ENCODE measurements at regions of chr2 and their contacts with region 1.

Region 1: DNA sequence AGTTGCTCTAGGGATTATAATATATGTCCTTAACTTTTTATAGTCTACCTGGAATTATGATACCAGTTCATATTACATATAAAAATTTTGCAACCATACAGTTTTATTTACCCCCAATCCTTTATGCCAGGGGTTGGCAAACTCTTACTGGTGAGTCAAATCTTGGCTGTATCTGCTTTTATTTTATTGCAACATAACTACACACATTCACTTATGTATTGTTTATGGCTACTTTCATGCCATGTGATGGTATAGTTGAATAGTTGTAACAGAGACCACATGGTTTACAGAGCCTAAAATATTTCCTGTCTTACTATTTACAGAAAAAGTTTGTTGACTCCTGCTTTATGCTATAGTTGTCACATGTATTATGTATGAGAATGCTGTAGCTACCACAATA is 25.8 kb upstream of the DLX2 start:
- DNase-seq: no peak
- ATAC-seq: no peak
- H3K4me3 ChIP-seq: no peak overlapping the region
- H3K27ac ChIP-seq: no peak overlapping the region
- H3K4me1 ChIP-seq: no peaks in the 10 kb centered on the region
- H3K27me3 ChIP-seq: no peaks in the 10 kb centered on the region
- CTCF ChIP-seq: no peak

Region 2: GRCh38 chr2:171703574-171704347 is 424.7 kb before region 1 on chr2:
- intact Hi-C with region 1: loop called (anchors 10 kb)
- DNase-seq: no peak
- ATAC-seq: no peak
- H3K4me3 ChIP-seq: no peak overlapping the region
- H3K27ac ChIP-seq: no peak overlapping the region
- H3K4me1 ChIP-seq: no peaks in the 10 kb centered on the region
- H3K27me3 ChIP-seq: no peaks in the 10 kb centered on the region
- CTCF ChIP-seq: peak; percentile 39

Region 3: GRCh38 chr2:172246649-172247048 is 118.2 kb after region 1 on chr2:
- intact Hi-C with region 1: no loop called
- DNase-seq: no peak
- ATAC-seq: no peak
- H3K4me3 ChIP-seq: no peak overlapping the region
- H3K27ac ChIP-seq: no peak overlapping the region
- H3K4me1 ChIP-seq: peaks cover 4% of the 10 kb centered on the region
- H3K27me3 ChIP-seq: no peaks in the 10 kb centered on the region
- CTCF ChIP-seq: no peak

Measured in lower lobe of right lung (tissue), 2 donors.